ENCODE measurements at regions of chr5 and their contacts with region 1.

Region 1: DNA sequence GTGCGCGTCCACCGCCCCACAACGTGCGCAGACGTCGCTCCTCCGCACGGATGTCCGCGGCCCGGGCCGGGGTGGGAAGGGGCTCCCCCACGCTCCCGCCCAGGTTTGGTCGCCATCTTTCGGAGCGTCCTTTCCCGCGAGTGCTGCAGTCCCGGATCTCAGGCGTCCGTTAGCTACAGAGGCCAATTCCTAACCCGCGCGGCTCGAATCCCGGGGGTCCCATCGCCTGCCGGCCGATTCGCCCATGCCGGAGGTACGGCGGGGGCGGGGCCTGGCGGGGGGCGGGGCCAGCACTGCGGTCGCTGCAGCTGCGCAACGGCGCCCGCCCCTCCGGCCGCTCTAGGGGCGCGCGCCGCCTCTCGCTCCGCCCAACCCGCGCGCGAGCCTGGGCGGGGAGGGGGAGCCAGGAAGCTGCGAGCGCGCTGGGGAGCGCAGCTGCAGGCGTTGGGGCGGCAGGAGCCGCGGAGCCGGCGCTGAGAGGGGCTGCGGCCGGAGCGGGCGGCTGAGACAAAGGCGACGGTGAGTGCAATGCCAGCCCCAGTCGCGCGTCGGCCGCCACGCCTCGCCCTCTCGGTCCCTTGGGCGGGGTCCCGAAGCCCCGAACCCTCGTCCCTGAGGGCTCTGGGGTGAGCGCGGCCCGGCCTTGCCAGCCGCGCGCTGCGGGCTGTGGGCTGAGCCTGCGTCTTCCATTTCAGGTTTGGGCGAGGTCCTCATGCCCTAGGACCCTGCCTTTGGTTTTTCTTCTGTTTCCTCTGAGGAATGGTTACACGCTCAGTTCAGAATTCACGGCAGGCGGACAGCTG is at the start of gene CDC42SE2:
- DNase-seq: peak; percentile 87
- ATAC-seq: peak; percentile 85
- H3K4me3 Mint-ChIP-seq: peak within 1 kb of the TSS; percentile 86
- H3K27ac Mint-ChIP-seq: peak within 1 kb of the TSS; percentile 94
- H3K4me1 Mint-ChIP-seq: peaks cover 45% of the 10 kb centered on the region
- H3K27me3 Mint-ChIP-seq: no peaks in the 10 kb centered on the region
- total RNA-seq, gene CDC42SE2: 115 to 126 TPM

Region 2: DNA sequence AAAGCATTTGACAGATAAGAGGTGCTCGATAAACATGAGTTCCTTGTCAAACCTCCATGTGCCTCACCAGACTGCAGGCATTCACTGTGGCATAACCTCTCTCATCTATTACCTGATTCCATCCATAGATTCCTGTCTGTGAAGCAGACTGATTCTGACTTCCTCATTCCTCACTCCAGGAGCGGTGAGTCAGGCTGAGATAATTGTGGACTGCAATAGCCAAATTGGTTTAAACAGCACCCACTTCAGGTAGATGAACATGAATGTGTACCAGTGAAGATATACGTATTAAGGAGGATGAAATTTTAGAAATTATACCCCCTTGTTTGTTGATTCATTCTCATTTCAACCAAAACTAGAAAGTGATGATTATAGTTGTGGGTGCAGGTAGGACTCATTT is 490.0 kb before region 1 on chr5:
- CTCF ChIA-PET with region 1: no interaction called
- POLR2A ChIA-PET with region 1: no interaction called
- DNase-seq: no peak
- ATAC-seq: no peak
- H3K4me3 Mint-ChIP-seq: no peak overlapping the region
- H3K27ac Mint-ChIP-seq: no peak overlapping the region
- H3K4me1 Mint-ChIP-seq: no peaks in the 10 kb centered on the region
- H3K27me3 Mint-ChIP-seq: peaks cover 4% of the 10 kb centered on the region

Region 3: GRCh38 chr5:131114754-131115153 is 149.1 kb before region 1 on chr5:
- CTCF ChIA-PET with region 1: no interaction called
- POLR2A ChIA-PET with region 1: no interaction called
- DNase-seq: no peak
- ATAC-seq: no peak
- H3K4me3 Mint-ChIP-seq: no peak overlapping the region
- H3K27ac Mint-ChIP-seq: no peak overlapping the region
- H3K4me1 Mint-ChIP-seq: no peaks in the 10 kb centered on the region
- H3K27me3 Mint-ChIP-seq: peaks cover 2% of the 10 kb centered on the region

Region 4: DNA sequence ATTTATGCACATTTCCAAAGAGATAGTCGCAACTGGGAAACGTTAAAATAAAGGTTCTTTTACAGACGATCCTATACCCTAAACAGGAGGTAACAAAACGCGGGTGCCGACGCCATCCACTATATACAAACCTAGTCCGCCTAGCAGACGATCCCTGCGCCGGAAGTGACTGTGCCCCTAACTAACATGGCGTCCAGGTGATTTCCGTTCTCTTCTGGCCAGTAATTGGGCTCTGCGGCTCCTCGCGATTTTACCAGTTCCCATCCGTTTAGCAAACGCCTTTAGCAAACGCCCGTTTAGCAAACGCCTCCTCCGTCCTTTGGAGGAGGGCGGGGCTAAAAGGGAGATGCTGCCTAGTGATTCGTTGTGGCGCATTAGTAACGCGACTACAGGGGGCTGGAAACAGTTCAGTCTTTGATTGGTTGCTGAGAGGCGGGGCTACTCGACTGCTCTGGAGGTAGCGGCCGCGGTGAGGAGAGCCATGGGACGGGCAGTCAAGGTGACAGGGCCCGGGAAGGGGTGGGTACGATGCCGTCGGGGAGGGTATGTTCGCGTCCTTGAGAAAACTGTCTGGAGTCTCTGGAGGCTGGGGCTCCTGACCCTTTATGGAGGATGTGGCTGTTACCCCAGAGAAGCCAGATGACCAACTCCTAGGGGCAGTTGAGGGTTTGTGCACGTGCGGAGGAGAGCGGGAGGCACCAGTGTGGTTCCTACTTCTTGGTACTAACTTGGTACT is 93.1 kb before region 1 on chr5 and contains the start of gene LYRM7:
- CTCF ChIA-PET with region 1: interaction called, 11 read pairs
- POLR2A ChIA-PET with region 1: interaction called, 33 read pairs
- DNase-seq: peak; percentile 99
- ATAC-seq: peak; percentile 97
- H3K4me3 Mint-ChIP-seq: peak within 1 kb of the TSS; percentile 99
- H3K27ac Mint-ChIP-seq: peak within 1 kb of the TSS; percentile 94
- H3K4me1 Mint-ChIP-seq: peaks cover 41% of the 10 kb centered on the region
- H3K27me3 Mint-ChIP-seq: no peaks in the 10 kb centered on the region
- total RNA-seq, gene LYRM7: 16.3 to 17.8 TPM

Region 5: DNA sequence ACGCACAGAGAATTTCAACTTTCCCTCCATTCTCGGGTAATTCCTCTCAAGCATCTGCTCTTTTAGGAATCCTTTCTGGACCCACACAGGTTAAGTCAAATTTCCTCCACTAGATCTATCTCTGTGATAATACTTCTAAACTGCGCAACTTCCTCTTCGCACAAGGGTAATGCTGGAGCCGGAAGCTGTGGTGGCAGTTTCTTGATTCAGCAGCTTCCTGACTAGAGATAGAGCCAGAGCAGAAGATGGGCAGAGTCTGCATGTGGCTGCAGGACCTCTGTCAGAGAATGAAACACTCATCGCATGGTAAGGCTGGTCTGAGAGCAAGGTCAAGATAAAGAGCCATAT is 11.1 kb before region 1 on chr5:
- CTCF ChIA-PET with region 1: interaction called, 67 read pairs
- POLR2A ChIA-PET with region 1: interaction called, 194 read pairs
- DNase-seq: peak; percentile 91
- ATAC-seq: peak; percentile 84
- H3K4me3 Mint-ChIP-seq: peak overlapping the region; percentile 92
- H3K27ac Mint-ChIP-seq: peak overlapping the region; percentile 93
- H3K4me1 Mint-ChIP-seq: peaks cover 77% of the 10 kb centered on the region
- H3K27me3 Mint-ChIP-seq: no peaks in the 10 kb centered on the region

Region 6: DNA sequence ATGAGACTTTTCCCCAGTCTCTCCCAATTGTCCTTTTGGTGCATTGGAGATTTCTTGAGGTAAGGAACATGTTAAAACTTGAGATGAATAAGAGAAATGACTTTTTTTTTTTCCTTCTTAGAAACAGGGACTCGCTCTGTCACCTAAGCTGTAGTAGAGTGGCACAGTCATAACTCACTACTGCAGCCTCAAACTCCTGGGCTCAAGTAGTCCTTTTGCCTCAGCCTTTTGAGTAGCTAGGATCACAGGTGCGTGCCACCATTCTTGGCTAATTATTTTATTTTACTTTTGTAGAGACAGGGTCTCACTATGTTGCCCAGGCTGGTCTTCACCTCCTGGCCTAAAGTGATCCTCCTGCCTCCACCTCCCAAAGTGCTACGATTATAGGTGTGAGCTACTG is 25.9 kb after region 1 on chr5:
- CTCF ChIA-PET with region 1: interaction called, 4 read pairs
- POLR2A ChIA-PET with region 1: interaction called, 44 read pairs
- DNase-seq: no peak
- ATAC-seq: peak; percentile 64
- H3K4me3 Mint-ChIP-seq: peak overlapping the region; percentile 77
- H3K27ac Mint-ChIP-seq: peak overlapping the region; percentile 88
- H3K4me1 Mint-ChIP-seq: peaks cover 72% of the 10 kb centered on the region
- H3K27me3 Mint-ChIP-seq: no peaks in the 10 kb centered on the region

Region 7: GRCh38 chr5:131382407-131383395 is 118.9 kb after region 1 on chr5:
- CTCF ChIA-PET with region 1: interaction called, 43 read pairs
- POLR2A ChIA-PET with region 1: interaction called, 158 read pairs
- DNase-seq: peak; percentile 72
- ATAC-seq: peak; percentile 77
- H3K4me3 Mint-ChIP-seq: peak overlapping the region; percentile 32
- H3K27ac Mint-ChIP-seq: peak overlapping the region; percentile 81
- H3K4me1 Mint-ChIP-seq: peaks cover 68% of the 10 kb centered on the region
- H3K27me3 Mint-ChIP-seq: no peaks in the 10 kb centered on the region

Region 8: DNA sequence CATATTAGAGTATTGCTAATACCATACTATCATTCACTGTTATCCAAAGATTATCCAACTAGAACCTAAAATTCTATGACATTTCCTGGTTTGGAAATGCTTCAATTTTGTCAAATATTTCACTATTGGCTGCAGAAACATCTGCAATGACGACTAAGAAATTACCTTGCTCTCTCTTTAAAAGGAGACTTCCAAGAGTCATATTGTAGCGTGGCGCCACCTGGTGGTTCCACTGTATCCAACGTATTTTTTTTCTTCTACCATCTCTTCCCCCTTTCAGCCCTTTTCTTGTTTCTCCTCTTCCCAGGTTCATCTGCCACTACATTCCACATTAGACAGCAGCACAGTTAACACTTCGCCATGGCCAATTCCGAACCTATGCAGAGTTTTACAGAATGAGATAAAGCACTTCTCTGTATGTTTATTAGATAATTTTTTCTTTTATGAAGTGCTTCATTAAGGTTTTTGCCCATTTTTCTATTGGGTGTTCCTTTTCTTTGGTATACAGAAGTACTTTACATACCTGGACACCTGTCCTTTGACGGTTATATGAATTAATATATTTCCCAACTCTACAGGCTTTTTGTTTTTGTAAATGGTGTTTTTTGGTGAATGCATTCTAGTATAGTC is 153.5 kb after region 1 on chr5:
- CTCF ChIA-PET with region 1: interaction called, 4 read pairs
- POLR2A ChIA-PET with region 1: interaction called, 18 read pairs
- DNase-seq: peak; percentile 91
- ATAC-seq: peak; percentile 37
- H3K4me3 Mint-ChIP-seq: peak overlapping the region; percentile 62
- H3K27ac Mint-ChIP-seq: peak overlapping the region; percentile 57
- H3K4me1 Mint-ChIP-seq: peaks cover 41% of the 10 kb centered on the region
- H3K27me3 Mint-ChIP-seq: no peaks in the 10 kb centered on the region

Measured in activated CD8-positive, alpha-beta T cell treated with anti-CD3 and anti-CD28 coated beads, Interleukin-2, amount 10 ng/mL, durations not matched to agents 7 days and 5 days (primary cell).